H1 (cell line): ENCODE measurements at regions of chr11 and their contacts with region 1.

Region 1: GRCh38 chr11:30172883-30173311 is 57.9 kb upstream of the FSHB start:
- DNase-seq: no peak
- H3K4me3 ChIP-seq: no peak overlapping the region
- H3K27ac ChIP-seq: no peak overlapping the region
- H3K4me1 ChIP-seq: no peaks in the 10 kb centered on the region
- H3K27me3 ChIP-seq: no peaks in the 10 kb centered on the region
- CTCF ChIP-seq: no peak
- EP300 ChIP-seq: no peak
- POLR2A ChIP-seq: no peak
- RAD21 ChIP-seq: no peak

Region 2: DNA sequence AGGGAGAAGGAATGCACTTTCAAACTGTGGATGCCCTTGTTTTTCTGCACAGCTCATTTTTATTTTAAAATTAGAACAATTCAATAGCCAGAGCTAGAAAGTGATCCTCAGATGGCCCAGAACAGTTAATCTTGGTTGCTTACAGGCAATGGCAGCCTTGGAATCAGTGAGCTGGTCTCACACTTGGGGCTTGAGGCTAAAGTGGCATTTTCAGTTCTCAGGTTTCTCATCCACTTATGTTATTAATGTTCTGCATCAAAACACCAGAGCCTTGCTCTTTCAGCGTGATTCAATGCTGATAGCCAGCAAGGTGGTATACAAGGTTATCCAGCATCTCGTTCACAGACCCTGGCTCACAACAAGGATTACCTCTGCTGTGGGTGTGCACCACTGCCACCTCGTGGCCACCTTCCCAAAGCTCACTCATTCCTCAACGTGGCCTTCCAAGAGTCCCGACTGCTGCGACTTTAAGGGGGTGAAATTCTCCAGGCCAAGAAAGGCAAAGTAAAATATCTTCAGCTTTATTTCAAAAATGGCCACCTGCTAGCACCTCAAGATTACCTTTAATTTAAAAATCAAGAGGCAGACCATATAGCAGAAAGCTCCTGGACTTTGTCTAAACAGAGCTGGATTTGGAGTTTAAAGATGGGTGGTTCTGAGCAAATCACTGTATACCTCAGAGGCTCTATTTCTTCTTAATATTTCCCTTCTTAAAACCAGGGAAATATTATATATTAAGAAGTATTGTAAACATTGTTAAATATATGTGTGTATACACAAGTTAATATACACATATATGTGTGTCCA is 23.7 kb after region 1 on chr11:
- CTCF ChIA-PET with region 1: interaction called, 29 read pairs
- POLR2A ChIA-PET with region 1: no interaction called
- DNase-seq: peak; percentile 49 to 89
- H3K4me3 ChIP-seq: no peak overlapping the region
- H3K27ac ChIP-seq: no peak overlapping the region
- H3K4me1 ChIP-seq: peaks cover 0 to 3% (median 0%) of the 10 kb centered on the region in 4 experiments; a peak in 1 of 7 replicates
- H3K27me3 ChIP-seq: no peaks in the 10 kb centered on the region
- CTCF ChIP-seq: peak; percentile 84 to 96 (median 94)
- EP300 ChIP-seq: no peak
- POLR2A ChIP-seq: no peak
- RAD21 ChIP-seq: peak; percentile 83 to 90